Mammary epithelial cell (primary cell): ENCODE measurements at regions of chr2 and their contacts with region 1.

Region 1: GRCh38 chr2:109457794-109458193 is 156.0 kb downstream of the SEPTIN10 start:
- DNase-seq: no peak
- H3K4me3 ChIP-seq: no peak overlapping the region
- H3K27ac ChIP-seq: no peak overlapping the region
- H3K4me1 ChIP-seq: no peaks in the 10 kb centered on the region
- H3K27me3 ChIP-seq: no peaks in the 10 kb centered on the region
- CTCF ChIP-seq: no peak

Region 2: DNA sequence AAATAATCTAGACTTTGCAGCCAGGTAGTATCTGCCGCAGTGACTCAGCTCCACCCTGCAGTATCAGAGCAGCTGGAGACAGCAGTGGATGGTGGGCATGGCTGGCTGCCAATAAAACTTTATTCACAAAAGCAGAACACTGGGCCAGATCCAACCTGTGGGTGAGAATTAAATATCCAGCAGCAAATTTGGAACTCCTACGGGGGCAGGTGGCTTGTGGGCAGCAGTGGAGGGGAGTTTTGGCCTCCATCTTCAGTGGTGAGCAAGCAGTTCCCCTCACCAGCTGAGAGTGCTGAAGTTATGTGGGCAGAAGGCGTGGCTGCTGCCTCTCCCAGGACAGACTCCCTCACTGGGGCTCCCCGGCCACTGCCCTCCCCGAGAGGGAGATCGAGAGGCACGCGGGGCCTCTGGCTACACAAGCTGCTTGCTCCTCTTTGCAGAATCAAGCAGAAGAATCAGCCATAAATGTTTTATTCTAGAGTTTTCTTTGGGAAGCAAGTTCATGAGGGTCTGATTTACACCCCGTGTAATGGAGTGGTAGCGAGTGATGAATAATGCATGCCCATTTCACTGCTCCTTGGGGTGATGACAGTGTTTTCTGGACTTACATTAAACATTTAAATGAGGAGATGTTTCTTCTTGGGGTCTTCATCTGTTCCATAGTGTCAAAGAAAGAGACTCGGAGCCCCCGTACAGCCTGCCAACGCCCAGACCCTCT is 48.3 kb before region 1 on chr2:
- CTCF ChIA-PET with region 1: no interaction called
- dilution Hi-C with region 1: loop called (anchors 5 kb)
- in situ Hi-C with region 1: no loop called
- intact Hi-C with region 1: no loop called
- DNase-seq: no peak
- H3K4me3 ChIP-seq: no peak overlapping the region
- H3K27ac ChIP-seq: no peak overlapping the region
- H3K4me1 ChIP-seq: peaks cover 9% of the 10 kb centered on the region
- H3K27me3 ChIP-seq: no peaks in the 10 kb centered on the region
- CTCF ChIP-seq: no peak

Region 3: DNA sequence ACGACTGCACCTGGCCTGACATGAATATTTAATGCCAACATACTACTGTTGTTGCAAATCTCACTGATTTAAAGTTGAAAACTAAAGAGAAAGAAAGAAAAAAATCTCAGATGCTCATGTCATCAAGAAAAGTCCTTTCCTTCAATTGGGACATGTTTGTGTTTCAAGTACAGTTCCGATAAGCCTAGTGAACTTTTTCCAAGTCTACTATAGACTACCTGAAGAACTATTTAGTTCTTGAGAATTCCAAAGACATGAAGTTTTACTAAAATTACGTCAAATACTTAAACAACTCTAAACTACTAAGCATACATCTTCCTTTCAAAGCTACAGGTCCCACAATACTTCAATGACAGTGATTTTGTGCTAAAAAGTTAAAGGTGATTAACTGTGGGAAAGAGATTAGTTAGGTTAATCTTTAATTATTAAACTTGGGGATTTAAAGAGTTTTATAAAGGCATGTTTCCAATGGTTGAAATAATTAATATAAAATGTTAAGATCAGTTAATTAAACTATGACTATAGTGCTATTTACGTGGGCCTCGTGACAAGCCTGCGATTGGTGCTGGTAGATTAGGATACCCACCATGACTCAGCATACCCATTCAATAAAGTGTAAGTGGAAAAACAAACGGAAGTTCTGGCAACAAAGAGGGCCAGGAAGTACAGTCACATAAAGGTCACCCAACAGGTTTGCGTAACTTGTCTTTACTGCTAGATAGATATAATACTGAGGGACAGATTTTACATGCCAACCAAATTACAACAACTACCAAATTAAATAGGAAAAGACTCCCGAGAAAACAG is 100.5 kb after region 1 on chr2:
- CTCF ChIA-PET with region 1: no interaction called
- dilution Hi-C with region 1: no loop called
- in situ Hi-C with region 1: no loop called
- intact Hi-C with region 1: no loop called
- DNase-seq: peak; percentile 81
- H3K4me3 ChIP-seq: no peak overlapping the region
- H3K27ac ChIP-seq: peak overlapping the region; percentile 45
- H3K4me1 ChIP-seq: peaks cover 15% of the 10 kb centered on the region
- H3K27me3 ChIP-seq: no peaks in the 10 kb centered on the region
- CTCF ChIP-seq: no peak